Heart left ventricle (tissue), 16 donors: ENCODE measurements at regions of chr7 and their contacts with region 1.

Region 1: DNA sequence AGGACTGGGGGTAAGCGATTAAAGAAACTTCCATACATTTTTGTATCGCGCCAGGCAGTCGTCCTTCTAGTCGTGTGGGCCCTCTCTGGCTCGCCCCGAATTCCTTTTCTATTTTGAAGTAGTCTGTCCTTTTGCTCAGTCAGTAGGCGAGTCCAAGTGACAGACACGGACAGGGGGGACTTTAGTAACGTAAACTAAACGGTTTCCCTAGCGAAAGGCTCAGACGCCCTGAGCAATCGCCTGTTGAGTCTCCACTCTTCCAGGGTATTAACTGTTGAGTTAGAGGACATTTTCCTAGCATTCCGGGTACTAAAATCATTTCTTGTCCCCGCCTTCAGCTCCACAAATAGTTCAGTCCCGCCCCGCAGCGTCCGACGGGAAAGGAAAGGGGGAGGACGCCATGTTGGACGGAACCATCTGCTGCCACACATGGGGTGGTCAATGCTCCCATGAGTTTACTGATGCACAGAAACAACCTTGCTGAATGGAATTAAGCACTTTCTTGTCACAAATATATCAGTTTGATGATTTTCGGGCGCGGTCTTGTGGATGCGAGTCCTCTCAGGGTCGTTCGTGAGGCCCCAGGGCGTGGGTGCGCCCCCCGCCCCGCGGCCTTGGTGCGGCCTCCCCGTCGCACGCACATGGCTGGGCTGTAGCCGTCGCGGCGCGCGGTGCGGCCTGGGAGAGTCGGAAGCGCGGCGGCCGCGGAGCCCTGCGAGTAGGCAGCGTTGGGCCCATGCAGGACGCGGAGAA is at the start of gene EIF3B:
- DNase-seq: peak; percentile 91 to 94 (median 93)
- ATAC-seq: peak; percentile 90 to 95 (median 94)
- H3K4me3 ChIP-seq: peak within 1 kb of the TSS; percentile 90 to 100 (median 98)
- H3K27ac ChIP-seq: peak within 1 kb of the TSS; percentile 97 to 100 (median 100)
- H3K4me1 ChIP-seq: peaks cover 0 to 48% (median 35%) of the 10 kb centered on the region in 12 donors
- H3K27me3 ChIP-seq: no peaks in the 10 kb centered on the region
- CTCF ChIP-seq: no peak
- POLR2A ChIP-seq: peak in 1 of 2 donors; percentile 48
- total RNA-seq, gene EIF3B: 57.4 to 95.7 (median 72.4) TPM

Region 2: GRCh38 chr7:1579481-1580421 is 774.6 kb before region 1 on chr7:
- intact Hi-C with region 1: loop called in 9 of 10 experiments (anchors 2 to 10 kb)
- DNase-seq: peak; percentile 69 to 88 (median 75)
- ATAC-seq: peak; percentile 82 to 93 (median 90)
- H3K4me3 ChIP-seq: no peak overlapping the region
- H3K27ac ChIP-seq: no peak overlapping the region
- H3K4me1 ChIP-seq: peaks cover 0 to 17% (median 6%) of the 10 kb centered on the region in 12 donors
- H3K27me3 ChIP-seq: no peaks in the 10 kb centered on the region
- CTCF ChIP-seq: peak; percentile 79 to 90 (median 84)
- POLR2A ChIP-seq: no peak

Region 3: GRCh38 chr7:2232766-2233520 is 121.4 kb before region 1 on chr7 and contains the start of gene MAD1L1:
- intact Hi-C with region 1: loop called in 1 of 10 experiments (anchors 5 kb)
- DNase-seq: peak; percentile 90 to 96 (median 91)
- ATAC-seq: peak; percentile 74 to 94 (median 92)
- H3K4me3 ChIP-seq: peak within 1 kb of the TSS; percentile 82 to 100 (median 96)
- H3K27ac ChIP-seq: peak within 1 kb of the TSS in 11 of 12 donors; percentile 24 to 87 (median 79)
- H3K4me1 ChIP-seq: peaks cover 2 to 41% (median 22%) of the 10 kb centered on the region in 12 donors
- H3K27me3 ChIP-seq: no peaks in the 10 kb centered on the region
- CTCF ChIP-seq: peak in 1 of 12 donors; percentile 8
- POLR2A ChIP-seq: peak in 1 of 2 donors; percentile 56
- total RNA-seq, gene MAD1L1: 11.1 to 29.7 (median 19.3) TPM

Region 4: DNA sequence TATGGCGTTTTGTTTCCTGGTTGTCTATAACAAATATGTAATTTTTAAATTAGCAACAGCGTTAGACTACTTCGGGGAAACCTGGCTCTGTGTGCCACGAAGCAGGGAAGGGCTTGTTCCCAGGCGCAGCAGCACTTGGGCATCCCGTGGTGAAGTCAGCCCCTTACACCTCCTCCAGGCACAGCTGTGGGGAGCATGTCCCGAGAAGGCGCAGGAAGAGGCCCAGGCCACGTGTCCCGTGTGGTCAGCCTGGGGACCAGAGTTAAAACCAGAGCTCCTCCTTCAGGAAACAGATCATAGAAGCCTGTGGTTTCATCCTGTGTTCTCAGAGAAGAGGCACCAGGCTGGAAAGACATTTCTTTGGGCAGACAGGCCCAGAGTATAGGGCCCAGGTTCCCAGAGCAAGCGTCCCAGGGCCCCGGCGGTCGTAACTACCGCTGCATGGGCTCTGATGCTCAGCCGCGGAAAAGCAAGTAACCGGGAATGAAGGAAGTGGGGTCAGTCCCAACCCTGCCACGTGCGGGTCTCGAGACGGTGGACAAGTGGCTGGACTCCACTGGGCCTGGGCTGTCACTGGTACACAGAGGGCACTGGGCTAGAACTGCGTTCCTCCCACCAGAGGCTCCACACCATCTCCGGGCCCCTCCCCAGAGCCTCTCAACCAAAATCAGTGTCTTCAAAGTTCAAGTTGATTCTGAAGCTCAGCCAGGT is 105.2 kb before region 1 on chr7:
- intact Hi-C with region 1: loop called (anchors 2 to 10 kb)
- DNase-seq: peak; percentile 70 to 82 (median 77)
- ATAC-seq: peak; percentile 67 to 89 (median 82)
- H3K4me3 ChIP-seq: peak overlapping the region in 2 of 12 donors; percentile 15 to 32
- H3K27ac ChIP-seq: peak overlapping the region in 7 of 12 donors; percentile 31 to 85 (median 59)
- H3K4me1 ChIP-seq: peaks cover 0 to 37% (median 3%) of the 10 kb centered on the region in 12 donors
- H3K27me3 ChIP-seq: no peaks in the 10 kb centered on the region
- CTCF ChIP-seq: peak in 3 of 12 donors; percentile 26 to 34 (median 33)
- POLR2A ChIP-seq: no peak

Region 5: GRCh38 chr7:2403014-2403717 is 48.8 kb after region 1 on chr7 and contains the start of gene CHST12:
- intact Hi-C with region 1: loop called in 3 of 10 experiments (anchors 2 to 10 kb)
- DNase-seq: peak; percentile 95 to 97 (median 96)
- ATAC-seq: peak; percentile 84 to 90 (median 89)
- H3K4me3 ChIP-seq: peak within 1 kb of the TSS; percentile 75 to 100 (median 93)
- H3K27ac ChIP-seq: peak within 1 kb of the TSS; percentile 43 to 89 (median 82)
- H3K4me1 ChIP-seq: peaks cover 3 to 74% (median 38%) of the 10 kb centered on the region in 12 donors
- H3K27me3 ChIP-seq: no peaks in the 10 kb centered on the region
- CTCF ChIP-seq: no peak
- POLR2A ChIP-seq: peak in 1 of 2 donors; percentile 67
- total RNA-seq, gene CHST12: 12.7 to 20.7 (median 15.6) TPM

Region 6: GRCh38 chr7:2431260-2431867 is 77.0 kb after region 1 on chr7:
- intact Hi-C with region 1: no loop called
- DNase-seq: no peak
- ATAC-seq: no peak
- H3K4me3 ChIP-seq: no peak overlapping the region
- H3K27ac ChIP-seq: no peak overlapping the region
- H3K4me1 ChIP-seq: peaks cover 0 to 7% (median 0%) of the 10 kb centered on the region in 12 donors
- H3K27me3 ChIP-seq: no peaks in the 10 kb centered on the region
- CTCF ChIP-seq: peak in 8 of 12 donors; percentile 18 to 39 (median 27)
- POLR2A ChIP-seq: no peak